A673 (cell line): ENCODE measurements at regions of chr12 and their contacts with region 1.

Region 1: GRCh38 chr12:14769969-14770495 is 33.2 kb downstream of the WBP11 start:
- DNase-seq: peak; percentile 77
- H3K4me3 ChIP-seq: peak overlapping the region; percentile 57
- H3K27ac ChIP-seq: peak overlapping the region; percentile 82
- H3K4me1 ChIP-seq: peaks cover 16% of the 10 kb centered on the region
- H3K27me3 ChIP-seq: no peaks in the 10 kb centered on the region
- CTCF ChIP-seq: peak; percentile 79

Region 2: DNA sequence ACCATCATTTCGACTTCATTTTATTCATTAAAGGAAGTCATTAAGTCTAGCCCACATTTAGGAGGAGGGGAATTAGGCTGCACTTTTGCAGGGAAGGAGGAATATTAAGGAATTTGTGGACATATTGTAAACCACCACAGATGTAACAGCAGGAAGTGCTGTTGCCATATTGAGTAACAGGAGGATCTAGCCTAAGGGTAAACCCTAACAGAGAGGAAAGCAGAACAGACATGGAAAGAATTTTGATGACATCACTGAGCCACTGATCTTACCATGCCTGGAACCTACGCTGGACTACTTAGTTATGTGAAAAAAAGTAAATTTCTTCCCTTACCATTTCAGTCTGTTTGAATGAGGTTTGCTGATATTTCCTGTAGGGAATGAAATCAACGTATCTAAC is 505.3 kb before region 1 on chr12:
- CTCF ChIA-PET with region 1: no interaction called
- POLR2A ChIA-PET with region 1: interaction called, 17 read pairs
- intact Hi-C with region 1: no loop called
- DNase-seq: peak; percentile 25
- H3K4me3 ChIP-seq: no peak overlapping the region
- H3K27ac ChIP-seq: no peak overlapping the region
- H3K4me1 ChIP-seq: peaks cover 34% of the 10 kb centered on the region
- H3K27me3 ChIP-seq: no peaks in the 10 kb centered on the region
- CTCF ChIP-seq: no peak

Region 3: DNA sequence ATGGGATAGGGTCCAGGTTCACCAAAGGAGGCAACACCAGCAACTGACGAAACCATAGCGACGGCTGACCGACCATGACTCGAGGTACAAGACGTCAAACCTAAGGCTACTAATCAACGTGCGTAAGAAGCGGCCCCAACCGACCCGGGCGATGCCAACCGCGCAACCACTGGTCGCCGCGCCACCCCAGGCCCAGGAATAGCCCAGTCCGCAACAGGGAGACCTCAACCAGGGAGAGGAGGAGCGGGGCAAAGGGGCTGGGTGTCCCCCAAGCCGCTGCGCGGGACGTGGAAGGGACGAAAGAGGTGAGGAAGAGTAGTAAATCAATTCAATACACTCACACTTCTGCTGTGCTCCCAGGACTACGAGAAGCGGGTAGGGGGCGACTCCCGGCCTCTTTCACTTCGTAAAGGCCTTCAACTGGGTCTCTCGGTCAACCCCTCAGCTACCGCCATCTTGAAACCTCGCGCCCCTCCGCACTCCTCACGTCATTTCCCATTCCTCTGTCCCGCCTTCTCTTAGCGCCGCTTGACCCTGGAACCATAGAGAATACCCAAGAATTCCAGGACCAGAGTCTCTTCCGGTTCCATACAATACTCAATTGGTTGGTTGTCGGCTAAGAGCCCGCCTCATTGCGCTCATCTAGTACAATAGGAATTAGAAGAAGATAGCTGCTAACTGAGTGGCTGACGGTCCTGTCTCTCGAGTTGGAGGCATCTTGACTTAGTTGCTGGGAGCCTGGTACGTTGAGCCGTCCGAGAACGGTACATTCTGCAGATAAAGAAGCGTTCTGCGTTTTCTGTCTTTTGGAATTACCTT is 33.2 kb after region 1 on chr12 and contains the starts of genes C12orf60 and WBP11:
- CTCF ChIA-PET with region 1: interaction called, 5 read pairs
- POLR2A ChIA-PET with region 1: no interaction called
- intact Hi-C with region 1: loop called (anchors 1 kb)
- DNase-seq: peak; percentile 99
- H3K4me3 ChIP-seq: peak within 1 kb of the TSS; percentile 79
- H3K27ac ChIP-seq: peak within 1 kb of the TSS; percentile 92
- H3K4me1 ChIP-seq: peaks cover 20% of the 10 kb centered on the region
- H3K27me3 ChIP-seq: no peaks in the 10 kb centered on the region
- CTCF ChIP-seq: no peak
- total RNA-seq, gene C12orf60: 1.9 and 2.2 TPM in 2 replicates
- total RNA-seq, gene WBP11: 144 and 150 TPM in 2 replicates